Activated CD4-positive, alpha-beta T cell treated with anti-CD3 and anti-CD28 coated beads for 36 hours (primary cell): ENCODE measurements at regions of chr10 and their contacts with region 1.

Region 1: DNA sequence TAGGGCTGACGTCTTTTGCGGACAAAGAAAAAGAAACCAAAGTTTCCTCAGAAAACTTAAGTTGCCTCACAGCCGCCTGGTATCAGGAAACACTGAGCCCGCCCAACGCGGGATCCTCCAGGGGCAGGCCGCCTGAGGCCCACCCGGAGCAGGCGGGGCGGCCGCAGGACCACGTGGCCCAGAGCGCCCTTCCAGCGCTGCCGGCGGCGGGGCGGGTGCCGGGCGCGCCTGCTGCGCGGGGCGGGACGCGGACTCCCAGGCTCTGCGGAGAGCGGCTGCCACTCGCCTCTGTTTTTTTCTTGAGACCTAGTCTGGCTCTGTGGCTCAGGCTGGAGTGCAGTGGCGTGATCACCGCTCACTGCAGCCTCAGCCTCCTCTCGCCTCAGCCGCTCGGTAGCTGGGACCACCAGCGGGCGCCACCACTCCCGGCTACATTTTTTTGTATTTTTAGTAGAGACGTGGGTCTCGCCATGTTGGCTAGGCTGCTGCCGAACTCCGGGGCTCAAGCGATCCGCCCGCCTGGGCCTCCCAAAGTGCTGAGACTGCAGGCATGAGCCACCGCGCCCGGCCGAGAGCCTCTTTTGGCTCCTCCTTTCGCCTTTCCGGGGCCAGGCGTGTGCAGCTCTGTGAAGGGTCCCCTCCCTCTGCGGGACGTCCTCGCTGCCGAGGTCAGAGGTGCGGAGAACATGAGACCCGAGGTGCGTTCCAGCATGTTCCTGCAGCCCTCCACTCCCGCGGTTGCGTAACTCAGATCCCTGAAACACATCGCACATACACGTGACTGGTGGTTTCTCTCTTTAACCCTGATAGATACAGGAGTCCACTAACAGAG is 11.6 kb upstream of the HNRNPF start:
- DNase-seq: peak; percentile 89
- ATAC-seq: peak; percentile 83
- H3K4me3 Mint-ChIP-seq: peak overlapping the region; percentile 79
- H3K27ac Mint-ChIP-seq: peak overlapping the region; percentile 99
- H3K4me1 Mint-ChIP-seq: peaks cover 37% of the 10 kb centered on the region
- H3K27me3 Mint-ChIP-seq: no peaks in the 10 kb centered on the region

Region 2: DNA sequence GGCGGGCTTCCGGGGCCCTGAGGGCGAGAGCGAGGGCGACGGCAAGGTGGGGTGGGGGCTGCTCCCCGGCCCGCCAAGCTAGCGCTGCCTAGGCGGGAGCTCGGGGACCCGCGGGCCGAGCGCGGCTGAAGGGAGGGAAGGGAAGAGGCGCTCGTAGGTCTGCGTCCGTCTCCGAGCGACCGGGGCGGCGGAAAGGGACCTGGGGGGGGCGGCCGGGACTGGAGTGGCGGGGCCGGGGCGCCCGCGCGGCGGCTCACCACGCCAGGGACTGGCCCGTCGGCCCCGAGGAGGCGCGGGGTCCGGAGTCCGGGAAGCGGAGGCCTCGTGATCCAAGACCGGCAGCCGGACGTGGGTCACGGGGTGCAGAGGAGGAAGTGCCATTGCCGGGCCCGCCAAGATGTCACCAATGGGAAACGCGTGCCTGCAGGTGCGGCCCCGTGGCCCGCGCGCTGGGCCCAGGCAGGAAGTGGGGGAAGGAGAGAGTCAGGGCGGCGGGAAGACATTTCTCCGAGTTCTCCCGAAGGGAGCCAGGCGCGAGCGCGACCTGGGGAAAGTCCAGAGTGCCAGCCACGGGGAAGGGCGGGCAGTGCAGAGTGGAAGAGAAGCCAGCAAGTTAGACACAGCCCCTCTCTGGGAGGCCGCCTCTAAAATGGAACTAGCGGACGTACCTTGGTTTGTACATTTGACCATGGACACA is 23.5 kb before region 1 on chr10:
- CTCF ChIA-PET with region 1: interaction called, 4 read pairs
- POLR2A ChIA-PET with region 1: interaction called, 4 read pairs
- intact Hi-C with region 1: loop called in 1 of 2 experiments (anchors 1 kb)
- DNase-seq: peak; percentile 93
- ATAC-seq: peak; percentile 72
- H3K4me3 Mint-ChIP-seq: peak overlapping the region; percentile 99
- H3K27ac Mint-ChIP-seq: peak overlapping the region; percentile 96
- H3K4me1 Mint-ChIP-seq: peaks cover 63% of the 10 kb centered on the region
- H3K27me3 Mint-ChIP-seq: no peaks in the 10 kb centered on the region

Region 3: DNA sequence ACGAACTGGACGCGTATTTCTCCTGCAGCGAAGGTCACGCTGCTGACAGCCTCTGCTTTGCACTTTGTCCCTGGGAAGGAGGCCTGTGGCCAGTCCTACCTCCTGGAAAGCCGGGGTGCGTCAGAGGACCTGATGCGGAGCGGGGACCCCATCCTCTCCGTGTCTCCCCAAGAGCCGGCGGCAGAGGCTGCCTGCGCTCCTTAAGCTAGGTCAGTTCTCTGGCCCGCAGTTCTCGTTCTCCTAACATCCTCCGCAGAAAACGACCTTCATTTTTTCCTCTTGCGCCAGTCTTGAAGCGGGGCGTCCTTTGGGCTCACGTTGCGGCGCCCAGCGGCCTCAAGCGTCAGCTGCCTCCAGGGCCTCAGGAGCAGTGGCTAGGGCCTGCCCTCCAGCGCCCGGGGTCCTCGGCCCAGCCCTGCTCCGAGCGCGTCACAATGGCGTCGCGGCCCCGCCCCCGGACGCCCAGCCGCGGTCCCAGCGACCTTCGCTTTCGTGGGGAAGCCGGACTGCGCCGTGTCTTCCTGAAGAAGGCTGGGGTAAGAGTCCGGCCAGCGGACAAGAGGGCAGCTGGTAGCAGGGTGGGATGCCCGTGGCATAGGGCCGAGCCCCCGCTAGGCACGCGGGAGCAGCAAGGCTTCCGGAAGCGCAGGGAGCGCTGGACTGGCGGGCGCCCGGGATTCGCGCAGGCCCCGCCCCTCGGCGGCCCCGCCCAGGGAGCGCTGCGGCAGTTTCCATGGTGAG is 16.0 kb after region 1 on chr10 and contains the start of gene ZNF487:
- CTCF ChIA-PET with region 1: interaction called, 4 read pairs
- POLR2A ChIA-PET with region 1: interaction called, 9 read pairs
- intact Hi-C with region 1: loop called (anchors 1 kb)
- DNase-seq: peak; percentile 92
- ATAC-seq: peak; percentile 97
- H3K4me3 Mint-ChIP-seq: peak within 1 kb of the TSS; percentile 98
- H3K27ac Mint-ChIP-seq: peak within 1 kb of the TSS; percentile 95
- H3K4me1 Mint-ChIP-seq: peaks cover 17% of the 10 kb centered on the region
- H3K27me3 Mint-ChIP-seq: no peaks in the 10 kb centered on the region
- total RNA-seq, gene ZNF487: 1.8 to 2.3 TPM